Right ventricle myocardium superior (tissue), 1 donor: ENCODE measurements at regions of chr6 and their contacts with region 1.

Region 1: DNA sequence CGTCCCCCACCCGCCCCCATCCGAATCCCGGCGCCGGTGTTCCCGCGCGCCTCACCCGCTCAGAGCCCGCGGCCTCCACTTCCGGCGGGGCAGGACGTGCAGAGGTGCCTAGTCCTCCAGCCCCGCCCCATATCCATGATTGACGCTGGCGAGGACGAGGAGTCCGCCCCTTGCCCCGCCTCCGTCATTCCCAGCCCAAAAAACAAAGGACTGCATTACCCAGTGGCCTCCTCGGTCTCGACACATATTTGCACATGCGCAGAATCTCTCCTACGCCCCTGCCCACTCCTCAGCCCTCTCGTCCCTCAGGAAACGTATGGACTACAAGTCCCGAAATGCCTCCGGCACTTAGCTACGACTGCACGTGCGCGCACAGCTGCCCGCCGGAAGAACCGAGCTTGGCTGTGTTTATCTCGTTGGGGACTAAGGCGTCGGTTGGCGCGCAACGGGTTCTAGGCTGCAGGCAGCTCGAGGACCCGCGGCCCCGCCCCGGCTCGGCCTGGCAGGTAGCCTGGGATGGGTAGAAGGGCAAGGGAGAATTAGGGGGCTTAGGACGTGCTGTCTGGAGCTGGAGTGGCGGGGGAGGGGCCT is at the starts of genes KLHDC3 and MEA1:
- DNase-seq: peak; percentile 99
- ATAC-seq: peak; percentile 91
- total RNA-seq, gene KLHDC3: 147 TPM
- total RNA-seq, gene MEA1: 26.7 TPM

Region 2: DNA sequence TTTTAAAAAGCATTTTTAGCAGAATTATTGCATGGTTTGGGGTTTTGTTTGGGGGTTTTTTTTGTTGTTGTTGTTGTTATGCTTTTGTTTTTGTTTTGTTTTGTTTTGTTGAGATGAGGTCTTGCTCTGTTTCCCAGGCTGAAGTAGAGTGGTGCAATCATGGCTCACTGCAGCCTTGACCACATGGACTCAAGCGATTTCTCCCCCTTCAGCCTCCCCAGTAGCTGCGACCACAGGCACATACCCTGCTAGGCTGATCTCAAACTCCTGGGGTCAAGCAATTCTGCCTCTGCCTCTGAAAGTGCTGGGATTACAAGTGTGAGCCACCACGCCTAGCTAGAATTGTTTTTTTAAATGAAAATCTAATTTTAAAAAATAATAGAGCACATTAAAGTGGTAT is 414.4 kb before region 1 on chr6:
- intact Hi-C with region 1: no loop called
- DNase-seq: no peak
- ATAC-seq: no peak

Region 3: DNA sequence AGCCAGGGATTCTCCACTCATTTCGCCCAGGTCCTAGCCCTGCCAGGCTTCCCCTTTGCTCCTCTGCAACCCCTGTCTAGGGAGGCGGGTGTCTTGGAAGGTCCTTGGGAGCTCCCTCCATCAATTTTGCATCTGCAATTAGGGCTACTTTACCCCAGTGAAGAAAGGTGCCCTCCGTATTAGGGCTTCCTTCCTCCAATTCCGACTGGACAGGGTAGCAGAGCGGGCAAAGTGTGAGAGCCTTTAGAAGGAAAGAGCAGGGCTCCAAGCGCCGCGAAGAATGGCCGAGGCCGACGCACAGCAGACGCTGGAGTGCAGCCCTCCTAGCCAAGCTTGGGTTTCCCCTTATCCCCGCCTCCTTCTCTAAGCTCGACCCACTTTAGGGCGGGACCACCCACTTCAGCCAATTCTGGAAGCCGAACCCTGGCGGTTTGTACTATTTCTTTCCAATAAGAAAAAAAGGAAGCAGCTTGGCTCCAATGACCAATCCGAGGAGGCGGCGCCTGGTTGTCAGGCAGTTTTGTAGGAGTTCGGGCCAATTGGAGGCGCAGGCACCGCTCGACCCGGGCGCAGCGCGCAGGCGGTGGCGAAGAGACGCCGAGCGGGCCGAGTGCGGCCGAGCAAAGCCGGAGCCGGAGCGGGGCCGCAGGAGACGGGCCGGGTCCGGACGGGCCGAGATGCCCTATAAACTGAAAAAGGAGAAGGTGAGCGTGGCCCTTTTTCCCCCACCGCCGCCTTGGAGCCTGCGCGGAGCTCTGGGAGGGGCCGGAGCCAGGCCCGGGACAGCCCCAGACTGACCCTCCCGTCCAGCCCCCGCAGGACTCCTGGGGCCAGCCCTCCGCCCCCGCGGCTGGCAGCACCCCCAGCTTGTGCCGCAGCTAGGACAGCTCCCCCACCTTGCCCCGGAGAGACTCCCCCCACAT is 29.7 kb before region 1 on chr6 and contains the start of gene PPP2R5D:
- intact Hi-C with region 1: loop called (anchors 2 kb)
- DNase-seq: peak; percentile 98
- ATAC-seq: peak; percentile 96
- total RNA-seq, gene PPP2R5D: 34.6 TPM

Region 4: GRCh38 chr6:43060034-43060754 is 46.3 kb after region 1 on chr6:
- intact Hi-C with region 1: no loop called
- DNase-seq: no peak
- ATAC-seq: peak; percentile 23

Region 5: GRCh38 chr6:43143235-43144124 is 129.5 kb after region 1 on chr6:
- intact Hi-C with region 1: loop called (anchors 2 kb)
- DNase-seq: peak; percentile 92
- ATAC-seq: peak; percentile 97

Region 6: DNA sequence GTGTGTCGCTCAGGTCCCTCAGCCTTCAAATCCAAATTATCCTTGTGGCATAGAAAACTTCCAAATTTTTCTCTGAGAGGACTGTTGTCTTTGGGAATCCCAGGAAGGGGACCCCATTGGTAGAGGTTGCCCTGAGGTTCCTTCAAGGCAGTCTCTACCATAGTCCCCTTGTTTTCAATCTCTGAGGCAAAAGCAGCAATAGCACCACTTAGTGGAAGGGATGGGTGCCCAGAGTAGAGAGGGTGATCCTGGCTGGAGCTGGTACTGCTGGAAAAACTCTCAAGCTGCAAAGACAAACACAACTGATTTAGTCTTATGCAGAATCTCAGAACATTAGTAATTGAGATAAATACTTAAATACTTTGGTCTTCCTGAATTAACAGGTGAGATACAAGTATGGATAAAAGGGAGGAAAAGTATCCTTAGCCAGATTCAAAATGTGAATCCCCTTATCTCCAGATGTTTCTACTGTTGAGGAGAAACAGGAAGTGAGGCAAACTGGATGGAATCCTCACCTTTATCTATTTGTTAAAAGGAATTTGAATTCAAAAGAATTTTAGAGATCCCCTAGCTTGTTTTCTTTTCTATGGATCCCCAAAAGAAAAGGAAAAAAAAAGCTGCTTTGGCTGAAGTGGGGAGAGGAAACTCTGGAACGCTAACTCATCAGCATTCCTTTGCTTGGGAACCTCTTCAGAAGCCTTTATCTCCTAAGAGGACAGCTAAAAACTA is 342.1 kb after region 1 on chr6:
- intact Hi-C with region 1: no loop called
- DNase-seq: no peak
- ATAC-seq: peak; percentile 80